Right ventricle myocardium inferior (tissue), 1 donor: ENCODE measurements at regions of chr9 and their contacts with region 1.

Region 1: GRCh38 chr9:72271613-72272478 is 93.2 kb downstream of the ZFAND5 start:
- DNase-seq: no peak
- ATAC-seq: peak; percentile 59

Region 2: GRCh38 chr9:71806901-71807307 is 464.9 kb before region 1 on chr9:
- intact Hi-C with region 1: loop called (anchors 10 kb)
- DNase-seq: no peak
- ATAC-seq: peak; percentile 97

Region 3: DNA sequence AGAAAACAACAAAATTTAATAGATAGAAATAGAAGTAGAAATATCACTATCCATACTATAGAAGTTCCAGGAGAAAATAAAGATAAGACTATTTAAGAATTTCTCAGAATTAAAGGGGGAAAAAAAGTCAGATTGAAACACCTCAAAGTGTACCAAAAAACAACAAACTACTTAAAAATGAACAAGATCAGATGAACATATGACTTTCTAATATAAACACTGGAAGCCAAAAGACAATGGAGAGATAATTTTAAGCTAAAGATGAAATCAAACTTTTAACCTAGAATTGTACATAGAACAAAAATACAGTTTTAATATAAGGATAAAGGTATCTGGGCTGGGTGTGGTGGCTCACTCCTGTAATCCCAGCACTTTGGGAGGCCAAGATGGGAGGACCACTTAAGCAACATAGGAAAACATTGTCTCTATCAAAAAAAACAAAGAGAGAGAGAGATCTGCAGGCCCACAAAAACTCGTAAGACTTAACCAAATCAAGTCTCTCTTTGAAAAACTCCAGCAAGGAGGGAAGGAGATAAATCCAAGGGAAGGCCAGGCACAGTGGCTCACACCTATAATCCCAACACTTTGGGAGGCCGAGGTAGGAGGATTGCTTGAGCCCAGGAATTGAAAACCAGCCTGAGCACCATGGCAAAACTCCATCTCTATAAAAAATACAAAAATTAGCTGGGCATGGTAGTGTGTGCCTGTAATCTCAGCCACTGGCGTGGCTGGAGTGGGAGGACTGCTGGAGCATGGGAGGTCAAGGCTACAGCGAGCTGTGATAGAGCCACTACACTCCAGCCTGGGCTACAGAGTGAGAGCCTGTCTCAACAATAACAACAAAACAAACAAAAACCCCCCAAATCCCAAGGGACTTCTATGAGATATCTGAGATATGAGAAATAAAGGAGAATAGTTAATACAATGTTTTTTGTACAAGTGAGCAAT is 393.2 kb before region 1 on chr9:
- intact Hi-C with region 1: loop called (anchors 5 kb)
- DNase-seq: no peak
- ATAC-seq: no peak

Region 4: DNA sequence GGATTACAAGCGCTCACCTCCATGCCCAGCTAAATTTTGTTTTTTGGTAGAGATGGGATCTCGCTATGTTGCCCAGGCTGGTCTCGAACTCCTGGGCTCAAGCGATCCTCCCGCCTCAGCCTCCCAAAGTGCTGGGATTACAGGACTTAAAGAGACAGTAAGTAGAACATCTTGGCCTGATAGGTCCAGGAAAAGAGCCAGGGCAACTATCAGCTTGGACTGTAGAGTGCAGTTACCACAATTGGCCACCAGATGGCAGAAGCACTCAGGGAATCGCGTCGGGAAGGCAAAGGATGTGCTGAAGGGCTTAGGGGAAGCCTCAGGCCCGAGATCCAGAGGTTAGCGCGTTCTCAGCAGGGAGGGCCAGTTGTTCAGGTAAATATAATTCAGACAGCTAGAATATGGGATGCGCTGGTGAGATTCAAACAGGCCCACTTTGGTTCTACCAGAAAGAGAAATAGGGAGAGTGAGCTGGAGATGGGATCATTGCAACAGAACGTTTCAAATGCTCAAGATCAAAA is 232.9 kb before region 1 on chr9:
- intact Hi-C with region 1: loop called (anchors 1 kb)
- DNase-seq: peak; percentile 74
- ATAC-seq: peak; percentile 80

Region 5: GRCh38 chr9:72315510-72316311 is 43.9 kb after region 1 on chr9:
- intact Hi-C with region 1: no loop called
- DNase-seq: no peak
- ATAC-seq: peak; percentile 78

Region 6: DNA sequence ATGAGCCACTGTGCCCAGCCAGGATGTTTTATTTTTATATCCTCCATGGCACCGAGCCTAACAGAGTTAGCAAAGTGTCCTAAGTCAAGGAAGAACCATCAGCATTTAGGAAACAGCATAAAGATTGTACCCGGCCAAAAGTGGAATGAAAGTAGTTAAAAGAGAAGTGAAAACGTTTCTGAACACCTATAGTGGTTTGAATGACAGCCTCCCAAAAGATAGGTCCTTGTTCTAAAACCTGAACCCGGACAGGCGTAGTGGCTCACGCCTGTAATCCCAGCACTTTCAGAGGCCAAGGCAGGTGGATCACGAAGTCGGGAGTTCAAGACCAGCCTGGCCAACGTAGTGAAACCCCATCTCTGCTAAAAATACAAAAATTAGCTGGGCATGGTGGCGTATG is 55.8 kb after region 1 on chr9:
- intact Hi-C with region 1: no loop called
- DNase-seq: no peak
- ATAC-seq: no peak

Region 7: GRCh38 chr9:72680593-72681282 is 408.9 kb after region 1 on chr9:
- intact Hi-C with region 1: no loop called
- DNase-seq: no peak
- ATAC-seq: no peak

Region 8: DNA sequence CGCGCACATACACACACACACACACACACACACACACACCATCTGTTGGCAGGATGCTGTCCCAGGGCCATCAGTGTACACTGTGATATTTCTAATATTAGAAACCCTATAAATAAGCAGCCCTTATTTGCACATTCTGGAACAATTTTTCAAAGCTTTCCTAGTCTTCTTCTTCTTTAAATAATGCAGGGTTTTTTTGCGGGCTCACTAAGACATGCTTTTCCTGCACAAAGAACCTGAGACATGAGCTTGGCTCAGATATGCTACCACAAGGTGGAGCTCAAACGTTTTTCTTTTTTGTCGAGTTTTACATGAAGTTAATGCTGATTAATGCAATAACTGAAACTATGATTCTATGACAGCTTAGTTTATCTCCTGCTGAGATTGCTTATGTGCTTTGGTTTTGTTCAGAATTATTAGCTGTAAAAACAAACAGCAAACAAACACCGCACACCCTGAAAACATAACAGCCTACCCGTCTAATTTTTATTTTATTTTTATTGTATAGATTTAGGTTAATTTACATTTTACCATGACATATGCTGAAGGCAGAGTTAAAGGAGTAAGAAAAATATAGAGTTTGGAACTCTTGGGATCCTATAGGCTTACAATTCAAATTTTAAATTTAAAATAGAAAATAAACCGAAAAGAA is 585.3 kb after region 1 on chr9:
- intact Hi-C with region 1: no loop called
- DNase-seq: peak; percentile 28
- ATAC-seq: peak; percentile 68